ENCODE measurements at regions of chr11 and their contacts with region 1.

Region 1: DNA sequence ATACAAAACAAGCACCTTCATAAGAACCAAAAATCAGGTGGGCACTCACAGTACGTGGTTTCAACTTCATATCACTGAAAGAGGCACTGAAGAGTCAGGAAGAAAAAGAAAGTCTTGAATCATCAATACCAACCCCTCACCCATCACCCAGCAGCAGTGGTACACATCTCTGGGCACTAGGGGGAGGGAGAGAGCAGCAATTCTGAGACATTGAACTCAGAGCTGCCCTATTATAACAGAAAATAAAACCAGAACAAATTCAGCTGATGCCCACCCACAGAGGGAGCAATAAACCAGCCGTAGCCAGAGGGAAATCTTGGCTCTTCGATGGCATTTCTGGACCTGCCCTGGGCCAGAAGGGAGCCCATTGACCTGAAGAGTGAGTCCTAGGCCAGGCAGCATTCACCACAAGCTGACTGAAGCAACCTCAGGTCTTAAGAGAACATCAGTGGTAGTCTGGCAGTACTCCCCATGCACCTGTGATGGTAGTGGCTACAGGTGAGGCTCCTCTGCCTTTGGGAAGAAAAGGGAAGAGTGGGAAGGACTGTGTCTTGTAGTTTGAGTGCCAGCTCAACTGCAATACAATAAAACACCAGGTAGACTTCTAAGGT is 42.2 kb upstream of the FAM181B start:
- DNase-seq: no peak
- H3K4me3 ChIP-seq: no peak overlapping the region; the same call in 1 of the 2 replicates
- H3K27me3 ChIP-seq: peaks cover 2% of the 10 kb centered on the region; the same call in 1 of the 2 replicates
- CTCF ChIP-seq: peak; percentile 90

Region 2: DNA sequence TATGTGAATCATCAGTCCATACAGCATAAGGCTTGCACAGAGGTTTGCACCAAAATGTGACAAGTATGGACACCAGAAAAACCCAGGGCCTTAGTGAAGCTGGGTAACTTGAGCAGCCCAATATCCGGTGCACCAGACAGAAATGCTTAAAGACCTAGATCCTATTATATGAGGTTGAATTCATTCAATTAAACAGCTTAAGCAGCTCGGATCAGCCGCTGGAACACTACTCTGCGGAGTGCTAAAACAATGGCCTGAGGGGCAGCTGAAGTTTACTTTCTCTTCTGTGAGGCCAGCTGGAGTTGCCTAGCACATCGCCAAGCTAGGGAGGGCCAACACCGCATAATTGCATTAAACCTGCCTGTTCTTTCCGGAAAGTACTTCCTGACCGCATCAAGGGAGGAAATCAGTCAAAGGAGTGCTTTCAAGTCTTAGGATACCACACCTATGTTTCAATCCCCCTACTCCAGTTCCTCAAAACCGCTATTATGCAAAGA is 25.1 kb before region 1 on chr11:
- CTCF ChIA-PET with region 1: no interaction called
- POLR2A ChIA-PET with region 1: no interaction called
- DNase-seq: no peak
- H3K4me3 ChIP-seq: no peak overlapping the region
- H3K27me3 ChIP-seq: no peaks in the 10 kb centered on the region; the same call in 1 of the 2 replicates
- CTCF ChIP-seq: no peak

Region 3: GRCh38 chr11:82787981-82788380 is 12.1 kb after region 1 on chr11:
- CTCF ChIA-PET with region 1: interaction called, 14 read pairs
- POLR2A ChIA-PET with region 1: no interaction called
- DNase-seq: no peak
- H3K4me3 ChIP-seq: no peak overlapping the region
- H3K27me3 ChIP-seq: no peaks in the 10 kb centered on the region
- CTCF ChIP-seq: no peak

Region 4: DNA sequence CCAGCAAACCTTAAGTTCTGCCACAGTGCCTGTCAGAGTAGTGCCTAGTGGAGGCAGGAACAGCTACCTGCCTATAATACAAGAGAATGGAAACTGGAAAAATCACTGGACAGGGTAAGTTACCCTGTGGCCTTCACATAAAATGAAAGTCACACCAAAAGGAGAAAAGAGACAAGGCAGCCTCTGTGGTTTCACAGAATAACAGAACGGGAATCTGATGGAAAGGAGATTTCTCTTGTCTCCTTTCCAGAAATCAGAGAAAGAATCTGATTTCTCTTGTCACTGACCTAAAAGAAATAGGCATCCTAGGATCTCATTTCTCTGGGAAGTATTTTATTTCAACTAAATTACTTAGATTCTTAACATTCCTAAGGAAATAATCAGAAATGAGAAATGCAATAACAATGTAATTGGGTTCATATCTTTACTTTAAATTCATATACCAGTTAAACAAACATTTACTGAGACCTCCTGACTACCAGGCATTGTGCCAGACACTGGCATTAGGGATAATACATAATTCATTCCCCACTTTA is 82.8 kb after region 1 on chr11:
- CTCF ChIA-PET with region 1: interaction called, 17 read pairs
- POLR2A ChIA-PET with region 1: no interaction called
- DNase-seq: peak; percentile 49
- H3K4me3 ChIP-seq: no peak overlapping the region
- H3K27me3 ChIP-seq: no peaks in the 10 kb centered on the region
- CTCF ChIP-seq: no peak

Region 5: GRCh38 chr11:82900277-82901164 is 124.7 kb after region 1 on chr11 and contains the start of gene PRCP:
- CTCF ChIA-PET with region 1: interaction called, 13 read pairs
- POLR2A ChIA-PET with region 1: no interaction called
- DNase-seq: peak; percentile 54
- H3K4me3 ChIP-seq: peak within 1 kb of the TSS; percentile 62
- H3K27me3 ChIP-seq: no peaks in the 10 kb centered on the region
- CTCF ChIP-seq: no peak
- polyA plus RNA-seq, gene PRCP: 62.0 and 127 TPM in 2 replicates

Region 6: GRCh38 chr11:83938148-83938547 is 1162.3 kb after region 1 on chr11:
- CTCF ChIA-PET with region 1: no interaction called
- POLR2A ChIA-PET with region 1: no interaction called
- DNase-seq: no peak
- H3K4me3 ChIP-seq: no peak overlapping the region
- H3K27me3 ChIP-seq: no peaks in the 10 kb centered on the region
- CTCF ChIP-seq: no peak